ENCODE measurements at regions of chr9 and their contacts with region 1.

Region 1: DNA sequence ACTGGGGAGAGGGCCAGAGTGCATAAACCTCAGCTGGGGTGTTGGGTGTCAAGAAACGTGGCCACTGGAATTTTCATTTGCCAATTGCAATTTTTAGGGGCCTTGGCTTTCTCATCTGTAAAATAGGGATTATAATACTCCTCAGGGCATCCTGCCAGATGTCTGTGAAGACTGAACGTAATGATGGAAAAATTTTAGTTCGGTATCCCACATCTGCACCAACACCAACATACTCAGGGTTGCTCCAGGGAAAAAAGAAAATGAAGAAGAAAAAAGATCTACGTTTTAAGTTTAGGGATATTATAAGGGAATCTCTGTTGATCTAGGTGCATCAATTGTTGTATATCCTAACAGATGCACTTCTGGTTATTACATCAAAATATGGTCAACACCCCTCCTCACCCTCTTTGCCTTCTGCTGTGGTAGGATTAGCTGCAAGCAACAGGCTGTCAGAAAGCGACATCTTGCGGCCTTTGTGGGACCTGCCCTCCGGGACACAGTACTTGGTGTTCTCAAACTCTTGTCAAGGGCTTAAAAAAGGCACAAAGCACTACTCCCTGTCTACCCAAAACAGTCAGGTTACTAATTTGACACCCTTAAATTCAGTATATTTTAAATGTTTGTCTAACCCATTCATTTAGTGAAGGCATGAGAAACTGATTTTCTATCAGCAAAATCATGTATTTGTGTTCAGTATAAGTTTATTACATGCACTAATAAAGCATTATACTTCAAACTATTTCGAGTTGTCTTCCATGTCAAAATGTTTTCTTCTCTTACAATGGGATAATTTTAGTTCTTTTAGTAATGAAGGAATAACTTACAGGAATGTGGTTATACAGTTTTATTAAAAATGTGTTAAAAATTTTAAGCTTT is 8.3 kb upstream of the TBC1D2 start:
- DNase-seq: peak; percentile 73 to 88 (median 82)
- ATAC-seq: peak; percentile 77 to 96 (median 94)
- H3K4me3 ChIP-seq: no peak overlapping the region
- H3K27ac ChIP-seq: no peak overlapping the region
- H3K4me1 ChIP-seq: no peaks in the 10 kb centered on the region
- H3K27me3 ChIP-seq: peaks cover 0 to 2% (median 0%) of the 10 kb centered on the region in 9 donors
- CTCF ChIP-seq: peak; percentile 77 to 97 (median 91)
- POLR2A ChIP-seq: no peak

Region 2: DNA sequence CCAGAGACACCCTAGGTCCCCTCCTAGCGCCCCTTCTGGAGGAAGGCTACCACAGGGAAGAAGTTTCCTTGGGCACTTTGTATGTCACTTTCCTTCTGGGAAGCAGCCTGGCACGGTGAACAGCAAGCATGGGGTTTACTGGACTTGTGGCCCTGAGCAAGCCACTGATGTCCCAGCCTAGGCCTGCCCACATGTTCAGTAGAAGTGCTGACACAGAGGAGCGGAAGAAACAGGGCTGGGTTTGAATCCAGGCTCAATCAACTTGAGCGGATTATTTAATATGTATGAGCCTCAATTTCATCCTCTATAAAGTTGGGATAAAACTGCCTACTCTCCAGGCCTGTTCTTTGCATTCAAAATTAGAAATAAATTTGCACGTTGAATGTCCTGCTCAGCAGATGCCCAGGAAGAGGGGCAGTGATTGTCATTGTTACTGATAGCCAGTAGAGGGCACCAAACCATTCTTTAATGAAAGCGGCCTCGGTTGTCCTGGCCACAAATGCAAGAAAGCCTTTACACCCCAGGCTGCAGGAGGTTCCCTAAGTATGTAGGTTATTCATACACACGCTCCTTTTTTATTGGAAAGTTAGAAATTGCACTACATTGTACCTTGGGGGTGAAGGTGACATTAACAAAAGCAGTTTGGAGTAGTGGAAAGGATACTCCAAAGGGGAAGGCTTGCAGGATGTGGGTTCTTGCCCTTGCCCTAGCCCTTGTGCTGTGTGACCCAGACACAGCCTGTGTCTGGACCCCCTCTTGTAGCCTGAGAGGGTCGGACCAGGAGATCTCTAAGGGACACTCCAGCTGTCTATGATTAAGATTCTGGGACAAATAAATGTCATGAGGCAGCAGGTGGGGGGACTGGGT is 553.1 kb before region 1 on chr9:
- intact Hi-C with region 1: loop called in 5 of 10 experiments (anchors 5 to 10 kb)
- DNase-seq: peak in 3 of 5 donors; percentile 27 to 50 (median 35)
- ATAC-seq: peak; percentile 47 to 88 (median 85)
- H3K4me3 ChIP-seq: no peak overlapping the region
- H3K27ac ChIP-seq: no peak overlapping the region
- H3K4me1 ChIP-seq: peaks cover 0 to 7% (median 0%) of the 10 kb centered on the region in 12 donors
- H3K27me3 ChIP-seq: peaks cover 0 to 37% (median 2%) of the 10 kb centered on the region in 9 donors
- CTCF ChIP-seq: peak; percentile 75 to 90 (median 86)
- POLR2A ChIP-seq: no peak

Region 3: DNA sequence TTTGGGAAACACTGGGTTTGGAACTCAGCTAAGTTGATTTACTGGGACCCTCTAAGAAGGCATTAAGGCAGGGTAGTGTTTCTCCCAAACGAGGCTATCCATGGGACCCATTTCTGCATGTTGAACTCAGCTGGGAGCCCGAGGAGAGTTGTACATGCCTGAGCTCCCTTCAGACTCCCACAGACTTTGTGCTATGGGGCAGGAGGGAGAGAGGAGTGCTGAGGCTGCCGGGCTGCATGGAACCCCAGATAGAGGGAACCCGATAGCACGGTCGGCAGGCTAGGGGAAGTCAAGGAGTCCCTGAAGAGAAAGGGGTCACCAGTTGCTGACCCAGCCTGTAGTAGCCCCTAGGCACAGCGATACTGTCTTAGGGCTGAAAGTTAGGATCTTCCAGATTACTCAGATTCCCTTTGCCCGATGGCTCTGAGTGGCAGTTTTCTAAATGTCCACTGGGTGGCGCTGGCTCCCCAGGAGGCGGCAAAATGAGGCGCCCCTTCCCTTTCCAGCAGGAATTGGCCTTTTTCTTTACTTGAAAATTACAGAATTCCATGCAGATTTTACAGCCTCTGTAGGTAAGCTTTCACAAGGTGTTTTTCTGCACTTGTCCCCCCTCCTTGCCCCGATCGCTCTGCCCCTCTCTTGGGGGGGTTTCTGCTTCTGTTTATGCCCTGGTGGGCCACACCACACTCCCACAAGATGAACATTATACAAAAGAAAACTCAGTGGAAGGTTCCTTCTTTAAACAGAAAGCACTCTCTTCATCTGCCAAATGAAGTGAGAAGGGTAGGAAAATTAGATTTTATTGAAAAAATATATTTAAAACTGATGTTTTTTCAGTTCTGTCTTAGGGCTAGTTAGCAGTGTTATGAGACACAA is 189.4 kb before region 1 on chr9:
- intact Hi-C with region 1: loop called (anchors 2 to 5 kb)
- DNase-seq: peak; percentile 41 to 70 (median 47)
- ATAC-seq: peak in 3 of 4 donors; percentile 33 to 62 (median 56)
- H3K4me3 ChIP-seq: no peak overlapping the region
- H3K27ac ChIP-seq: peak overlapping the region in 2 of 12 donors; percentile 23 to 37
- H3K4me1 ChIP-seq: peaks cover 0 to 21% (median 6%) of the 10 kb centered on the region in 12 donors
- H3K27me3 ChIP-seq: no peaks in the 10 kb centered on the region
- CTCF ChIP-seq: peak; percentile 81 to 98 (median 94)
- POLR2A ChIP-seq: no peak

Region 4: GRCh38 chr9:98207606-98208005 is 56.1 kb before region 1 on chr9:
- intact Hi-C with region 1: loop called (anchors 1 to 2 kb)
- DNase-seq: no peak
- ATAC-seq: no peak
- H3K4me3 ChIP-seq: no peak overlapping the region
- H3K27ac ChIP-seq: no peak overlapping the region
- H3K4me1 ChIP-seq: peaks cover 0 to 9% (median 1%) of the 10 kb centered on the region in 12 donors
- H3K27me3 ChIP-seq: no peaks in the 10 kb centered on the region
- CTCF ChIP-seq: no peak
- POLR2A ChIP-seq: no peak

Region 5: GRCh38 chr9:98315551-98316060 is 51.9 kb after region 1 on chr9:
- intact Hi-C with region 1: no loop called
- DNase-seq: peak; percentile 72 to 84 (median 74)
- ATAC-seq: peak; percentile 81 to 89 (median 87)
- H3K4me3 ChIP-seq: no peak overlapping the region
- H3K27ac ChIP-seq: no peak overlapping the region
- H3K4me1 ChIP-seq: peaks cover 0 to 3% (median 0%) of the 10 kb centered on the region in 12 donors
- H3K27me3 ChIP-seq: no peaks in the 10 kb centered on the region
- CTCF ChIP-seq: peak; percentile 79 to 92 (median 86)
- POLR2A ChIP-seq: no peak

Measured in heart left ventricle (tissue), 16 donors.